H1 (cell line): ENCODE measurements at regions of chr16 and their contacts with region 1.

Region 1: GRCh38 chr16:55701442-55702319 is 45.9 kb downstream of the SLC6A2 start:
- DNase-seq: peak in 1 of 2 experiments; percentile 73
- H3K4me3 ChIP-seq: no peak overlapping the region
- H3K27ac ChIP-seq: no peak overlapping the region
- H3K4me1 ChIP-seq: peaks cover 0 to 9% (median 3%) of the 10 kb centered on the region in 4 experiments; a peak in 4 of 7 replicates
- H3K27me3 ChIP-seq: no peaks in the 10 kb centered on the region
- CTCF ChIP-seq: peak; percentile 75 to 86 (median 79)
- EP300 ChIP-seq: no peak
- POLR2A ChIP-seq: no peak
- RAD21 ChIP-seq: peak; percentile 85 to 91

Region 2: GRCh38 chr16:55622930-55623561 is 78.6 kb before region 1 on chr16:
- CTCF ChIA-PET with region 1: interaction called, 23 read pairs
- POLR2A ChIA-PET with region 1: no interaction called
- DNase-seq: peak; percentile 41 to 75
- H3K4me3 ChIP-seq: no peak overlapping the region
- H3K27ac ChIP-seq: no peak overlapping the region
- H3K4me1 ChIP-seq: 0 out of 7 replicates have a peak, but pooled peaks cover 0 to 3% (median 0%) of the 10 kb centered on the region in 4 experiments
- H3K27me3 ChIP-seq: no peaks in the 10 kb centered on the region; a peak in 1 of 7 replicates
- CTCF ChIP-seq: peak; percentile 65 to 86 (median 74)
- EP300 ChIP-seq: no peak
- POLR2A ChIP-seq: no peak
- RAD21 ChIP-seq: peak; percentile 54 to 69

Region 3: DNA sequence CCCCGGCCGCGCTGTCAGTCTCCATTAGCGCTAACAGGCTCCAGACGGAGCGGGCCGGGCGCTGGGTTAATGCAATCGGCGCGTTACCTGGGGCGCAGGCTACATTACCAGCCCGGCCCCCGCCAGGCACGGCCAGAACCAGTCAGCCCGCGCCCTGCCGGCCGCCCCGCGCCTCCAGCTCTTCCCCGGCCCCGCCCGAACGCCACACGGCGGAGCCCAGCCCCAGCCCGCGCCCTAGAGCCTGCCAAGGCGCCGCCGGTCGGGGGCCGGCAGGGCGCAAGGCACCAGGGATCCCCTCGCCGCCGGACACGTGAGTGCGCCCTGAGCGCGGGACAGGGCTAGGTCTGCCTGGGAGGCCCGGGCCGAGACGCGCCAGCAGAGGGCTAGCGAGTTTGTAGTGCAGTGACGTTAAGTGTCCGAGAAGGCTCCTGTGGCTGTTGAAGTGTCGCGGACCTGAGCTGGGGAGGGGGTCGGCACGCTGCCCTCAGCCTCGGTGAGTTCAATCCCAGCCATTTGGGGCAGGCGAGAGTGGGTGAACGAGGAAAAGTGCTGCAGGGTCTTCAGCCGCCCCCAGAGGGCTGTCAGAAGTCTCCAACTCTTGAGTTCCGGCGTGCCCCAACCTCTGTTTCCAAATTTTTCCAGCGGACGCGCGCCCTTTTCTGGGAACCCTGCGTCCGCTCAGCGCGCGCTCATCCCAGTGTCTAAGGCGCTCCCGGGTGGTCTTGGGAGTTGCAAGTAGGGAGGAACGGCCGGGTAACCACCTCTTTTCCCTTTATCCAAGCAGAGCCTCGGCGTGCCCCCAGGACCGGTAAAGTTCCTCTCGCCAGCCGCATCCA is 45.6 kb before region 1 on chr16 and contains the start of gene SLC6A2:
- CTCF ChIA-PET with region 1: interaction called, 94 read pairs
- POLR2A ChIA-PET with region 1: no interaction called
- DNase-seq: peak; percentile 21 to 80
- H3K4me3 ChIP-seq: peak within 1 kb of the TSS; percentile 45 to 76 (median 54)
- H3K27ac ChIP-seq: no peak within 1 kb of the TSS
- H3K4me1 ChIP-seq: peaks cover 0 to 3% (median 1%) of the 10 kb centered on the region in 4 experiments; a peak in 4 of 7 replicates
- H3K27me3 ChIP-seq: peaks cover 38 to 62% (median 51%) of the 10 kb centered on the region in 4 experiments
- CTCF ChIP-seq: peak; percentile 21 to 40 (median 39)
- EP300 ChIP-seq: no peak
- POLR2A ChIP-seq: no peak
- RAD21 ChIP-seq: no peak; a peak in 1 of 4 replicates
- total RNA-seq, gene SLC6A2: 0.40 TPM in 1 of 2 replicates, not detected in the other

Region 4: GRCh38 chr16:55687802-55688201 is 13.9 kb before region 1 on chr16:
- CTCF ChIA-PET with region 1: interaction called, 41 read pairs
- POLR2A ChIA-PET with region 1: no interaction called
- DNase-seq: no peak
- H3K4me3 ChIP-seq: no peak overlapping the region
- H3K27ac ChIP-seq: no peak overlapping the region
- H3K4me1 ChIP-seq: peaks cover 0 to 3% (median 0%) of the 10 kb centered on the region in 4 experiments; a peak in 2 of 7 replicates
- H3K27me3 ChIP-seq: no peaks in the 10 kb centered on the region; a peak in 1 of 7 replicates
- CTCF ChIP-seq: no peak
- EP300 ChIP-seq: no peak
- POLR2A ChIP-seq: no peak
- RAD21 ChIP-seq: no peak

Region 5: DNA sequence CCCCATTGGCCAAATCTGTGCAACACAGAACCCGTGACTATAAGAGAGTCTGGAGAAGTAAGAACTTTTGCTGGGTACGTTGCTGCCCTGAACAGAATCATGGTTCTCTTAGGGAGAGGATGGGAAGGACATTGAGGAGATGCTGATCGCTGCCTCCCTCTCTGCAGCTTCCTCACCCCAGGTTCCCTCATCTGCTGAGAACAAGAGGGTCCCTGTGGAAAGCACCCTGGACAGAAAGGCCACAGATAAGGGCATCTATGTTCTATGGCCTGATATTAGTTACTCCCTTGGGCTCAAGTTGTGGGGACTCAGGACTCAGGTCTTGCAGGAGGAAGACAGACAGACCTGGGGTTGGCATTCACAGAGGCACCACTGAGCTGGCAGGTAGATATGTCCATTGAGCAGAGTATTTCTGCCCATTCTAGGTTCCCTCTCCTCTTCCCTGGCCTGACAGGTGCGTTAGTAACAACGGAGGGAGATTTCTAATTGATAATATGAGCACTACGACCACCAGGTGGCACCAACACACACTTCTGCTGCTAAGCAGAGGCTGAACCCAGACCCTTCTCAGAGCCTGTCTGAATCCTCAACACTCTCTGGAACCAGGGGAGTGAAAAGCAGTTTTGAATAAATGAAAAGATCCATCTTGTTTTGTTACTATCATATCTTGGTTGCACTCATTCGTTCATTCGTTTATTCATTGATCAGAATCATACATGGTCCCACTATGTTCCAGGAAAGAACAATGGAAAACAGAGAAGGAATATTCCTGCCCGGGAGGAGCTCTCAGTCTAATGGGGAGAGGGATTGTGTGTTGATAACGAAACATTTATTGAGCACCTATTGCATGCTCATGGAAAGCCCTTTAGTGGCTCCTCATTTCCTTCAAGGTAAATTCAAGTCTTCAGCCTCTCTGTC is 10.5 kb after region 1 on chr16:
- CTCF ChIA-PET with region 1: interaction called, 11 read pairs
- POLR2A ChIA-PET with region 1: no interaction called
- DNase-seq: peak in 1 of 2 experiments; percentile 81
- H3K4me3 ChIP-seq: no peak overlapping the region
- H3K27ac ChIP-seq: no peak overlapping the region
- H3K4me1 ChIP-seq: no peaks in the 10 kb centered on the region
- H3K27me3 ChIP-seq: no peaks in the 10 kb centered on the region; a peak in 1 of 7 replicates
- CTCF ChIP-seq: peak; percentile 37 to 80 (median 78)
- EP300 ChIP-seq: no peak
- POLR2A ChIP-seq: no peak
- RAD21 ChIP-seq: peak; percentile 82 to 85